ENCODE measurements at regions of chr3 and their contacts with region 1.

Region 1: GRCh38 chr3:46378426-46378942 is 7.7 kb downstream of the CCR5 start:
- DNase-seq: peak; percentile 42 to 78
- ATAC-seq: peak; percentile 65

Region 2: DNA sequence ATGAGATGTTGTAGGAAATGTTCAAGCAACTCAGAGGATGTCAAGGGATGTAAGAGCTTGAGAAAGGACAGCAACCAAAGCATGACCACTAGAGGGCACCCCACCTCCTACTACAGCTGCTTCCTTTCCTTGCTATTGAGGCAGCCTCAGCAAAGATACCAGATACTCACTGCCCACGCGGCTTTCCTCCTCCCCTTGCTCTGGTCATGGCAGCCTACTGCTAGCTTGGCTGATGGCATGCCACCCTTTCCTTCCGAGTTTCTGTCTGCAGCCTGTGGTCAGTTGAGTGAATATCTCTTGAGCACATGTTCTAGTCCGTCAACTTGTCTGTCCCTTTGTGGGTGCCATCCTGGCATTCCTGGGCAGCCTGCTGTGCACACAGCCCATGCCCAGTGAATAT is 439.6 kb before region 1 on chr3:
- intact Hi-C with region 1: loop called in 1 of 2 experiments (anchors 10 kb)
- DNase-seq: peak; percentile 71 to 92
- ATAC-seq: peak; percentile 94

Region 3: GRCh38 chr3:46089237-46090011 is 289.1 kb before region 1 on chr3:
- intact Hi-C with region 1: loop called in 1 of 2 experiments (anchors 10 kb)
- DNase-seq: peak; percentile 42 to 65
- ATAC-seq: peak; percentile 53

Region 4: GRCh38 chr3:46266598-46266997 is 111.9 kb before region 1 on chr3:
- intact Hi-C with region 1: no loop called
- DNase-seq: no peak
- ATAC-seq: no peak